Aorta (tissue), 5 donors: ENCODE measurements at regions of chr4 and their contacts with region 1.

Region 1: GRCh38 chr4:120156120-120156718 is 89.6 kb upstream of the MAD2L1 start:
- DNase-seq: no peak
- ATAC-seq: no peak
- H3K4me3 ChIP-seq: no peak overlapping the region
- H3K27ac ChIP-seq: no peak overlapping the region
- H3K4me1 ChIP-seq: no peaks in the 10 kb centered on the region
- H3K27me3 ChIP-seq: no peaks in the 10 kb centered on the region

Region 2: DNA sequence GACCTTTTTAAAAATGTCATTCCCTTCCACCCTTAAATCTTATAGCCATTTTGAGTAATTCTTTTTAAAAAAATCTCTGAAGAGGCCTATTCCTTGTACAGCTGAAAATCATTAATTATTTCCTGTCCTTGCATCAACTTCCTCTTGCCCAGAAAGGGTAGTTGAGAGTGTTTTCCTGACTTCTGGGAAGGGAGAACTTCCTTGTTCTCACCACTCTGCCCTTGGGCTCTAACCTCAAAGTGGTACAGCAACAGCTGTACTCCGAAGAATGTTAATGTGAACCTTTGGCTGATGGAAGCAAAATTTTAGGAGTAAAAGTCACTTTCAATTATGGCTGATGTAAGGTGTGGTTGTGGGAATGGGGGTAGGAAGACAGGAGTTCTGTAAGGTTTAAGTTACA is 819.2 kb before region 1 on chr4:
- intact Hi-C with region 1: no loop called
- DNase-seq: no peak
- ATAC-seq: no peak
- H3K4me3 ChIP-seq: no peak overlapping the region
- H3K27ac ChIP-seq: no peak overlapping the region
- H3K4me1 ChIP-seq: no peaks in the 10 kb centered on the region
- H3K27me3 ChIP-seq: no peaks in the 10 kb centered on the region

Region 3: GRCh38 chr4:120622601-120623000 is 466.4 kb after region 1 on chr4:
- intact Hi-C with region 1: no loop called
- DNase-seq: no peak
- ATAC-seq: no peak
- H3K4me3 ChIP-seq: no peak overlapping the region
- H3K27ac ChIP-seq: no peak overlapping the region
- H3K4me1 ChIP-seq: no peaks in the 10 kb centered on the region
- H3K27me3 ChIP-seq: no peaks in the 10 kb centered on the region

Region 4: GRCh38 chr4:120718979-120719566 is 562.9 kb after region 1 on chr4:
- intact Hi-C with region 1: loop called in 1 of 2 experiments (anchors 10 kb)
- DNase-seq: no peak
- ATAC-seq: peak; percentile 85
- H3K4me3 ChIP-seq: no peak overlapping the region
- H3K27ac ChIP-seq: no peak overlapping the region
- H3K4me1 ChIP-seq: no peaks in the 10 kb centered on the region
- H3K27me3 ChIP-seq: no peaks in the 10 kb centered on the region

Region 5: DNA sequence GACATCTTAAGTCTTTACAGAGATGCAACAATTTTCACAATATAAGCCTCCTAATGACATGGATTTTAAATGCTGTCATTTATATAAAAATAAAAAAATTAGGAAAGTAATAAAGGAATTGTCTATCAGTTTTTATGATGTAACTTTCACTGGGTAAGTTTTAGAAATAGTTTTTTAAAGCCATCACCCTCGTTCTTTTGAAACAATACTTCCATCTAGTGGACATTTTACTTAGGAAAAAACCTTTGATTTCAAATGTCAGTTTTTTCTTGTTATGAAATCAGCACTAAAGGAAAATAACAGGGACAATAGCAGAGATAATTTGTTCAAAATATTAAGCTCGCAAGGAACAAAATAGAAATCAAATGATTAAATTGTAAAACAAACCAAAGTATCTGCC is 940.4 kb after region 1 on chr4:
- intact Hi-C with region 1: loop called (anchors 5 kb)
- DNase-seq: no peak
- ATAC-seq: no peak
- H3K4me3 ChIP-seq: no peak overlapping the region
- H3K27ac ChIP-seq: no peak overlapping the region
- H3K4me1 ChIP-seq: no peaks in the 10 kb centered on the region
- H3K27me3 ChIP-seq: no peaks in the 10 kb centered on the region

Region 6: GRCh38 chr4:121252224-121252806 is 1096.1 kb after region 1 on chr4:
- intact Hi-C with region 1: loop called in 1 of 2 experiments (anchors 10 kb)
- DNase-seq: peak; percentile 67 to 76
- ATAC-seq: peak; percentile 76
- H3K4me3 ChIP-seq: no peak overlapping the region
- H3K27ac ChIP-seq: no peak overlapping the region
- H3K4me1 ChIP-seq: no peaks in the 10 kb centered on the region
- H3K27me3 ChIP-seq: no peaks in the 10 kb centered on the region